ENCODE measurements at regions of chr1 and their contacts with region 1.

Region 1: GRCh38 chr1:6727535-6727934 is 25.9 kb upstream of the DNAJC11 start:
- DNase-seq: peak; percentile 15
- H3K4me3 ChIP-seq: no peak overlapping the region
- H3K27ac ChIP-seq: no peak overlapping the region
- H3K27me3 ChIP-seq: no peaks in the 10 kb centered on the region
- CTCF ChIP-seq: peak; percentile 86

Region 2: GRCh38 chr1:6675941-6676340 is 51.6 kb before region 1 on chr1:
- CTCF ChIA-PET with region 1: no interaction called
- POLR2A ChIA-PET with region 1: no interaction called
- DNase-seq: no peak
- H3K4me3 ChIP-seq: no peak overlapping the region
- H3K27ac ChIP-seq: no peak overlapping the region
- H3K27me3 ChIP-seq: no peaks in the 10 kb centered on the region
- CTCF ChIP-seq: no peak

Region 3: GRCh38 chr1:6743189-6744101 is 15.9 kb after region 1 on chr1:
- CTCF ChIA-PET with region 1: interaction called, 12 read pairs
- POLR2A ChIA-PET with region 1: no interaction called
- DNase-seq: peak; percentile 36
- H3K4me3 ChIP-seq: 0 out of 2 replicates have a peak overlapping the region, but pooled peaks have one; percentile 13
- H3K27ac ChIP-seq: peak overlapping the region; percentile 73
- H3K27me3 ChIP-seq: peaks cover 5% of the 10 kb centered on the region
- CTCF ChIP-seq: no peak